ENCODE measurements at regions of chr7 and their contacts with region 1.

Region 1: DNA sequence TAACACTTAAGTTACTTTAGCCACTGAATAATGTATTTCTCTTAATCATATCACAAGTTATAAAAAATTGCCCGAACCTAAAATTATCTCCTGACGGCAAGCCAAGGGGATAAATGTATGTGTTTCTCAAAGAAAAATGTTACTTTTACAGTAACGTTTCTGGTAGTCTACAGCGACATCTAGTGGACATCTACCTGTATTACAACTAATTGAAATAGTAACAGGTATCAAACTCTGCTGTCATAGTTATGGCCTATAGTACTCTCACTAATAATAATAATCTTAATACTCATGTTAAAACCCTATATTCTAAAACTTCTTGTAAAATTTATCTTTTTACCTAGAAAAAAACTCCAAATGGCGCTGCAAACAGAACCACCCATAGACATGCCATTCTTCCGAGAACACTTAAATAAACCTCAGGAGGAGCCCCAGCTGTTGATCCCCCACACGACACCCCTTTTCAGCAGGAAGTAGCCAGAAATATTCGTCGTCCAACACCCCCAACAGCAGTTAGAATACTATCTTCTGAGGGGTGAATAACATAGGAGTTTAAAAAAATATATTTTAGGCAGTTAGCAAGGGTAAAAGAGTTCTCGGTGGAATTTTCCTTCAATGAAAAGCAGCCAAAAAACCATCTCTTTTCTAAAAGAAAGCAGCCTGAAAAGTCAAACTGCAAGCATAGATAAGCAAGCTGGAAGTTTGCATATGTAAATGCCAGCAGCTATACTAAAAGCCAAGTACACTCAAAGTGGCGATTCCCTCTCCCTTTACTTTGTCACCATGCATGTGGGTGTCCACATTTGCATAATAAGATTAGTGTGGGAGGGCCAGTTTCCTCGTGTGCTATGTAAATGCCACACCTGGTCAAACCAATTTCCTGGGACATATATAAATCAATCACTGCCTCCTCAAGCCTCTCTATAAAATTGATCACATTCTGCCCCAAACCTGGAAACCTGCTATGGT is 40.5 kb upstream of the ZNF107 start:
- DNase-seq: no peak
- ATAC-seq: no peak
- H3K4me3 ChIP-seq: no peak overlapping the region
- H3K27ac ChIP-seq: no peak overlapping the region
- H3K4me1 ChIP-seq: no peaks in the 10 kb centered on the region
- H3K27me3 ChIP-seq: peaks cover 0 to 21% (median 0%) of the 10 kb centered on the region in 7 donors
- CTCF ChIP-seq: peak; percentile 75 to 89 (median 84)

Region 2: DNA sequence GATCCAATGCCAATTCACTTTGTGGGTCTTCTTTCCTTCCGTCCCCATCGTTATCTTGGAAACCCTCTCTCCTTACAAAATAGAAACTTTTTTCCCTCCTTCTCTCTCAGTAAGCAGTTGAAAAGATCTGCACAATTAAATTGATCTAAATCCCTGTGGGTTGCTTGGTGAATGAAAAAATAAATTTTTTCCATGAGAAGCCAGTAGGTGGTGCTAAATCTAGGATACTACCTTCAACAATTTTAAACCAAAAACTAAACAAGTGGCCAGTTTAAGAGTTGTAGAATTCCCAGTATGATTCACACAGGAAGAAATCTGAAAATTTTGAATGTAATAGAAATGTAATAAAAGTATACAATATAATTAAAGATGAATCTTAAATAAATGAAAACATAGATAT is 1617.0 kb before region 1 on chr7:
- intact Hi-C with region 1: loop called in 2 of 10 experiments (anchors 10 kb)
- DNase-seq: no peak
- ATAC-seq: no peak
- H3K4me3 ChIP-seq: no peak overlapping the region
- H3K27ac ChIP-seq: no peak overlapping the region
- H3K4me1 ChIP-seq: no peaks in the 10 kb centered on the region
- H3K27me3 ChIP-seq: no peaks in the 10 kb centered on the region
- CTCF ChIP-seq: peak in 3 of 9 donors; percentile 26 to 32 (median 31)

Region 3: DNA sequence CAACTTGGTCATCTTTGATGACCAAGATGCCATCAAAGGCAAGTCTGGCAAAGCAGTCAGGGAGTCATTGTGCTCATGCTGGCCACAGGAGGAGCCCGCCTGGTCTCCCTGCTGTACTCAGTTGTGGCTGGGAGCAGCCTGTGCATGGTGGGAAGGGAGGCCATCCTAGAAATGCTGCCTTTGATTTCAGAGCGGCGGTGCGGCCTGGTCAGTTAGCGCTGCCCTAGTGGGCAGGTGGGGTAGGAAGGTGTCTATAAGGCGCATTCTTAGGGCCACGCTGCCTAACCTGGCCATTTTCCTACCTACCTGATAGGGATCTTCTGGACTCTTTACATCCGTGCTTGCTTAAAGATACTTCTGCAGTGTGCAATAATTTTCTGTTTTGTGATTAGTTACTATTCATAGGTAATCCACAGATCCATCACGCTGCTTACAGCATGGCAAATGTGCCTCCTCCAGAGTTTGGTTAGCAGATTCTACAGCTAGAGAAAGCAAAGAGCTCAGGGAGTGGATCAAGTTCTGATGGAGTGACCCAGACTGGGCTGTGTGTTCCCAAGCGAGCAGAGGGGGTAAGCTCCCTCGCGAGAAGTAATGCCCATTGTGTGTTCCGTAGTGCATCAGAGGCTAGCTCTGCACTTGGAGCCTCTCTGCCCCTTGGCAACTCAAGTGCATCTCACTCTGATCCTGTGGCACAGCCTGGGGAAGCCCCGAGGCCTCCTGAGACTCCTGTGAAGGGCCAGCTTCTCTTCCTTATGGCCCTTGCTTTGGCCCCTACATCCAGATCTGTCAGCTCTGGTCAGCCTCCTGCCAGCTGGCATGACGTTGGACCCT is 1596.8 kb before region 1 on chr7:
- intact Hi-C with region 1: loop called in 1 of 10 experiments (anchors 10 kb)
- DNase-seq: no peak
- ATAC-seq: no peak
- H3K4me3 ChIP-seq: no peak overlapping the region
- H3K27ac ChIP-seq: no peak overlapping the region
- H3K4me1 ChIP-seq: no peaks in the 10 kb centered on the region
- H3K27me3 ChIP-seq: no peaks in the 10 kb centered on the region
- CTCF ChIP-seq: no peak

Measured in heart right ventricle (tissue), 16 donors.